K562 (cell line): ENCODE measurements at regions of chr1 and their contacts with region 1.

Region 1: DNA sequence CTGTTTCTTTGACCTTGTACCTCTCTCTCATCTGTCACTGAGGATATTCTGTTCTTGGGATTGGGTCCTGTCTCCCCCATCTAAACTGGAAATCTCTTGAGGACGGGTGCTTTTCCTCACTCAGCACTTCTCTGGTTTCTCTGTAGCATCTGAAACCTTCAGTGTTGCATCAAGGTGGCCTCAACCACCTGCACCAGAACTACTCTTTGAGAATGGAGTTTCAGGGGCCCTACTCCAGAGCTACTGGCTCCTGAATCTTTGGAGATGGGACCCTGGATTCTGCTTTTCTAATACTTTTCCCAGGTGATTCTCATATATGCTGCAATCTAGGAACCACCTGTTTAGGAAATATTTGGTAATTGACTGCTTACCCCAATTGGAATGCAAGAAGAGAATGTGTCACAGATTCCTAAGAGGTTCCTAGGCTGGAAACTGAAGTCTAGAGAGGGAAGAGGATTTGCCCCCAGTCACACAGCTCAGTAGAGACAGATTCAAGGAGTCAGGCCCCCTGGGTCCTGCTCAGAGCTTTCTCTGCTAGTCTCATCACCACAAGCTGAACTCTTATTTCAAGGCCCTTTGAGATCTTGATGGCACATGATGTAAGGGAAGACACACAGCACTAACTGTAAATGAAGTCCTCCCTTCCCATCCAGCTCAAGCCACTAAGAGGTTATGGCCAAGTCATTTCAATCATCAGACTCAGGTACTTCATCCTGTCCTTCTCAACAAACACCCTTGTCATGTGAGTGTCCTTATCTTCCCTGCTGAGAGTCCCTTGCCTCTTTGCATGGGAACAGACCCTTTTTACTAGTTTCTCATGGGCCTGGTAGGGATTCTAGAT is 48.7 kb downstream of the EIF2D start:
- DNase-seq: peak in 1 of 4 experiments; percentile 27
- ATAC-seq: no peak
- H3K4me3 ChIP-seq: no peak overlapping the region
- H3K27ac ChIP-seq: peak overlapping the region; percentile 44; the same call in 2 of the 3 replicates
- H3K4me1 ChIP-seq: peaks cover 16 to 47% of the 10 kb centered on the region in 2 experiments
- H3K27me3 ChIP-seq: no peaks in the 10 kb centered on the region
- CTCF ChIP-seq: no peak
- EP300 ChIP-seq: no peak
- POLR2A ChIP-seq: no peak
- RAD21 ChIP-seq: no peak

Region 2: GRCh38 chr1:206550440-206550839 is 13.1 kb before region 1 on chr1:
- CTCF ChIA-PET with region 1: no interaction called
- POLR2A ChIA-PET with region 1: interaction called, 11 read pairs
- in situ Hi-C with region 1: no loop called
- intact Hi-C with region 1: no loop called
- DNase-seq: no peak
- ATAC-seq: no peak
- H3K4me3 ChIP-seq: no peak overlapping the region
- H3K27ac ChIP-seq: no peak overlapping the region
- H3K4me1 ChIP-seq: peaks cover 11 to 47% of the 10 kb centered on the region in 2 experiments
- H3K27me3 ChIP-seq: no peaks in the 10 kb centered on the region
- CTCF ChIP-seq: no peak
- EP300 ChIP-seq: no peak
- POLR2A ChIP-seq: no peak
- RAD21 ChIP-seq: no peak

Region 3: GRCh38 chr1:206613407-206613806 is 49.8 kb after region 1 on chr1:
- CTCF ChIA-PET with region 1: no interaction called
- POLR2A ChIA-PET with region 1: no interaction called
- in situ Hi-C with region 1: no loop called
- intact Hi-C with region 1: no loop called
- DNase-seq: no peak
- ATAC-seq: no peak
- H3K4me3 ChIP-seq: no peak overlapping the region
- H3K27ac ChIP-seq: no peak overlapping the region
- H3K4me1 ChIP-seq: peaks cover 5 to 7% of the 10 kb centered on the region in 2 experiments; a peak in 4 of 5 replicates
- H3K27me3 ChIP-seq: no peaks in the 10 kb centered on the region
- CTCF ChIP-seq: no peak
- EP300 ChIP-seq: no peak
- POLR2A ChIP-seq: no peak
- RAD21 ChIP-seq: no peak